GM10248 (cell line): ENCODE measurements at regions of chr14 and their contacts with region 1.

Region 1: DNA sequence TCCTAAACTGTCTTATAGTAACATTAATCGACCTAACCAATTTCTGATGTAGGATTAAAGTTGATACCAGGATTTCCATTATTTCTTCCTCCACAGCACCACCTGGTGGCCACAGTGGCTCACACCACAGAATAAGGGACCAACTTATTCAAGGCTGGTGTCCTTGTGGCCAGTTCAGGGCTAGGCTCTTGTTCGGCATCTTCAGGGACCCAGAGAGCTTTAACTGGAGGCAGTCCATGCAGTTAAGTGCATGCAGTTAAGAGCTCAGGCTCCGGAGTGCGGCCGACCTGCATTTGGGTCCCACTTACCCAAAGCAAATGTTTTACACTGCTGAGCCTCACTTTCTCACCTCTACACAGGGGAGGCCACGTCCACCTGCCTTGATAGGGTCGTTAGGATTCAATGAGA is 42.0 kb upstream of the GPR68 start:
- DNase-seq: peak; percentile 79
- CTCF ChIP-seq: peak; percentile 87

Region 2: GRCh38 chr14:90642244-90642717 is 644.3 kb before region 1 on chr14:
- CTCF ChIA-PET with region 1: no interaction called
- POLR2A ChIA-PET with region 1: no interaction called
- DNase-seq: no peak
- CTCF ChIP-seq: no peak

Region 3: DNA sequence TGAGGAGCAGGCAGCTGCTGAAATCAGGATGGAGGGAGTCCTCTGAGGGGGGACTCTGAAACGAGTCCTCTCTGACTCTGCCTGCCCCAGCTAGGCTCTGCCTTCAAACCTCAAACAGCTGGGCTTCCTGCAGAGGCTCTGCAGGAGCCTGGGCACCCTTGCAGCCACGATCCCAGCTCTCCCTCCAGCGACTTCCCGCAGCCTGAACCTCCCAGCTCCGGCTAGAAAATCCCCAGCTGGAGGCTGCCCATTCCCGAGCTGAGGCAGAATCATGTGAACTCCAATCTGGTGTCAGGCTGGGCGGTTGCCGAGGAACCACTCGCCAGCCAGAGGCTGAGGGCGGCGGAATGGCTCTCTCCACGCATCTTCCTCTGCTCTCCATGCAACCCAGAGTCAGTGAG is 42.0 kb before region 1 on chr14 and contains the start of gene GPR68:
- CTCF ChIA-PET with region 1: interaction called, 22 read pairs
- POLR2A ChIA-PET with region 1: no interaction called
- DNase-seq: no peak
- CTCF ChIP-seq: no peak

Region 4: DNA sequence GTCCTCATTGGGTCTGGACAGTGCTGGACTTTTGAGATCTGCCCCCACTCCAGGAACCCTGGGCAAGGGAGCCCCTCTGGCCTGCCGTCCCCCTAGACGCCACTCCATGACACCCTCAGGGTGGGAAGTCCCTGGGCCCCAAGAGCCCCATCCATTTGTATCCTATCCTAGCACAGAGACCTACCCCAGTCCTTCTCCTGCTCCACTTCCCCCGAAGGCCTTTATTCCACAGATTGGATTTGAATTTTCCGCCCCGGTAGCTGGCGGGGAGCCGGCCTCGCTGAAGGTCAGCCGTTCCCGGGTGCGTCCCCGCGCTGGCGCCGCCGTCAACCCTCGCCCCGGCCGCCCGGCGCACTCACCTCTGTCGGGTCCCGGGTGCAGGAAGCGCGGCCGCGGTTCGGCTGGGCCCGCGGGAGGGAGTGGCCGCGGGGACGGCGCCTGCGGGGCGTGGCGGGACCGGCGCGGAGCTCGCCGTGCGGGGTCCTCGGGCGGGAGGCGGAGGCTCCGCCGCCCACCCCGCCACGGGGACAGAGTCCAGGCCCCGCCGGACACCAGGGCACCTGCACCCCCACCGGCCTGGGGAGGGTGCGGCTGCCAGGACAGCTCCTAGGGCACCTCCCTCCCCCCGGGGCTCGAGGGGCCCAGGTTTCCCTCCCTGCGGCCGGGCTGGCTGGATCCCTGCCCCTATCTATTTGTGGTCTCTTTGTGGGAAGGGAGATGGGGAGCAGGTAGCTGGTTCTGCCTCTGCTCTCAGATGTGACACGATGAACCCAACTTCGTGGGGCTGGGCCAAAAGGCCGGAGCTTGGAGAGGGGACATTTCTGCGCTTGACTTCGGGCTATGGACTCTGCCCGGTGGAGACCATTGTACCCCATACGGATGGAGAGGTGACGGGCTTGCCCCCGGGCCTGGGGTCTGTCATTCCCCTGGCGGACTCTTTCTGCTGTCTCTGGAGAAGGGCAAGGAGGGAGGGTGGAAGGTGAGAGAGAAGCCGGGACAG is 22.1 kb before region 1 on chr14:
- CTCF ChIA-PET with region 1: interaction called, 12 read pairs
- POLR2A ChIA-PET with region 1: no interaction called
- DNase-seq: no peak
- CTCF ChIP-seq: no peak

Region 5: GRCh38 chr14:91303091-91303923 is 16.8 kb after region 1 on chr14:
- CTCF ChIA-PET with region 1: interaction called, 41 read pairs
- POLR2A ChIA-PET with region 1: no interaction called
- DNase-seq: peak; percentile 92
- CTCF ChIP-seq: no peak